CD4-positive, alpha-beta memory T cell (primary cell): ENCODE measurements at regions of chr1 and their contacts with region 1.

Region 1: GRCh38 chr1:147786536-147786935 is 26.1 kb upstream of the GJA5 start:
- DNase-seq: no peak
- H3K4me3 ChIP-seq: no peak overlapping the region
- H3K4me3 Mint-ChIP-seq: no peak overlapping the region
- H3K27ac ChIP-seq: no peak overlapping the region
- H3K27ac Mint-ChIP-seq: no peak overlapping the region
- H3K4me1 ChIP-seq: no peaks in the 10 kb centered on the region
- H3K4me1 Mint-ChIP-seq: no peaks in the 10 kb centered on the region
- H3K27me3 ChIP-seq: no peaks in the 10 kb centered on the region
- H3K27me3 Mint-ChIP-seq: peaks cover 6 to 15% of the 10 kb centered on the region in 2 donors

Region 2: GRCh38 chr1:147853391-147853790 is 66.9 kb after region 1 on chr1:
- CTCF ChIA-PET with region 1: no interaction called
- POLR2A ChIA-PET with region 1: no interaction called
- intact Hi-C with region 1: loop called (anchors 2 kb)
- DNase-seq: no peak
- H3K4me3 ChIP-seq: no peak overlapping the region
- H3K4me3 Mint-ChIP-seq: no peak overlapping the region
- H3K27ac ChIP-seq: no peak overlapping the region
- H3K27ac Mint-ChIP-seq: no peak overlapping the region
- H3K4me1 ChIP-seq: no peaks in the 10 kb centered on the region
- H3K4me1 Mint-ChIP-seq: no peaks in the 10 kb centered on the region
- H3K27me3 ChIP-seq: no peaks in the 10 kb centered on the region
- H3K27me3 Mint-ChIP-seq: peaks cover 5 to 14% of the 10 kb centered on the region in 2 donors